ENCODE measurements at regions of chr19 and their contacts with region 1.

Region 1: GRCh38 chr19:57279418-57280066 is 743 bp upstream of the ZNF460 start:
- DNase-seq: peak; percentile 94 to 97
- H3K4me3 ChIP-seq: peak overlapping the region; percentile 74
- H3K4me3 Mint-ChIP-seq: no peak overlapping the region
- H3K27ac Mint-ChIP-seq: no peak overlapping the region
- H3K4me1 ChIP-seq: no peaks in the 10 kb centered on the region; the same call in none of the 2 replicates
- H3K4me1 Mint-ChIP-seq: peaks cover 11% of the 10 kb centered on the region
- H3K27me3 ChIP-seq: no peaks in the 10 kb centered on the region
- H3K27me3 Mint-ChIP-seq: no peaks in the 10 kb centered on the region
- CTCF ChIP-seq: peak in 1 of 2 experiments; percentile 52

Region 2: GRCh38 chr19:57191141-57192076 is 88.1 kb before region 1 on chr19 and contains the start of gene ZNF264:
- CTCF ChIA-PET with region 1: no interaction called
- POLR2A ChIA-PET with region 1: no interaction called
- intact Hi-C with region 1: loop called (anchors 2 kb)
- DNase-seq: peak; percentile 86 to 90
- H3K4me3 ChIP-seq: peak within 1 kb of the TSS; percentile 96
- H3K4me3 Mint-ChIP-seq: peak within 1 kb of the TSS; percentile 95
- H3K27ac Mint-ChIP-seq: peak within 1 kb of the TSS; percentile 98
- H3K4me1 ChIP-seq: 0 out of 2 replicates have a peak, but pooled peaks cover 10% of the 10 kb centered on the region
- H3K4me1 Mint-ChIP-seq: no peaks in the 10 kb centered on the region
- H3K27me3 ChIP-seq: no peaks in the 10 kb centered on the region
- H3K27me3 Mint-ChIP-seq: no peaks in the 10 kb centered on the region
- CTCF ChIP-seq: peak in 1 of 2 experiments; percentile 34
- total RNA-seq, gene ZNF264: 24.9 and 26.2 TPM in 2 replicates

Region 3: DNA sequence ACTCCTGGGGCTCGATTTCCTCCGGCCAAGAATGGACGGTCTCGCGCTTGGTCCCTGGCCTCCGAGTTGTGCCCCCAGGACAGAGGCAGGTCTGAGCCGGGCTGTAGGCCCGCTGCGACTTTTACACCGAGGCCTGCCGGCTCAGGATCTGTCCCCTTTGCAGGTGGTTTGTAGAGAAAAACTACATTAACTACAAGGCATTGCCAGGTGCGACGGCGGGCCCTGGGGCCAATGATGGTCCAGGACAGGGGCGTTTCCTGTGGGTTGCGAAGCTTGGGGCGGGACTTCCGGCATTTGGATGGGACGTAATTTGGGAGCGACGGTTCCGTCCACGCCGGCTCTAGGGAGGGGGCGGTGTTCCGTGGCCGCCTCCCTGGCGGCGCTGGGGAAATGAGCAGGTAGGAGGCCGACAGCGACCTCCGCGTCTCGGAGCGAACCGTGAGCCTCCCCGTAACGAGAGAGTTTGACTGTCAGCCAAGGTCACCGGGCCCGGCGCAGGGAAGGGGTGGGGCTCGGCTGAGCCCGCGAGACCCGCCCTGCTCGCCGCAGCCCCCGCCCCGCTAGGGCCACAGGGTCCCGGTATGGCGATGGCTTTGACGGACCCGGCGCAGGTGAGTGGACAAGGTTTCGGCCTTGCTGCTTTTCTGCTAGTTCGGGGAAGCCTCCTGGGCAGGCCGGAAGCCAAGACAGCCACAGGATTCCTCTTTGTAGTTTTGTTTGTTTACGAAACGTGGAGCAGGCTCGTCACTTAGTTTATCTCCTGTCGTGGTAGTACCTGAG is 39.0 kb before region 1 on chr19 and contains the start of gene ZNF805:
- CTCF ChIA-PET with region 1: no interaction called
- POLR2A ChIA-PET with region 1: no interaction called
- intact Hi-C with region 1: loop called (anchors 1 kb)
- DNase-seq: peak; percentile 96 to 97
- H3K4me3 ChIP-seq: peak within 1 kb of the TSS; percentile 77
- H3K4me3 Mint-ChIP-seq: peak within 1 kb of the TSS; percentile 75
- H3K27ac Mint-ChIP-seq: peak within 1 kb of the TSS; percentile 90
- H3K4me1 ChIP-seq: peaks cover 7% of the 10 kb centered on the region; the same call in 1 of the 2 replicates
- H3K4me1 Mint-ChIP-seq: no peaks in the 10 kb centered on the region
- H3K27me3 ChIP-seq: no peaks in the 10 kb centered on the region
- H3K27me3 Mint-ChIP-seq: no peaks in the 10 kb centered on the region
- CTCF ChIP-seq: no peak
- total RNA-seq, gene ZNF805: 13.6 and 13.8 TPM in 2 replicates

Region 4: DNA sequence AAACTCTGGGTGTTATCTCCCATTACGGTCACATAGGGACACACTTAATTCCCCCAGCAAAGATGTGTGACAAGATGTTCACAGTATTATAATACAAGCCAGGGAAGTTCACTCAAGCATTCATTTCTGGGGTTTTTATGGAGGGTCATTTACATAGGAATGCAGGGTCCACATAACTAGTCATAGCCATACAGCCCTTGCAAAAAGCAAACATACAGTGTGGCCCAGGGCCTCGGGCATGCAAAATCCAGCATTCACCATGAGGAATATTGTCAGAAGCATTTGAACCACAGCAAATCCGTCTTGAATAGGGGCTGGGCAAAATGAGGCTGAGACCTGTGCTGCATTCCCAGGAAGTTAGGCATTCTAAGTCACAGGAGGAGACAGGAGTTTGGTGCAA is 12.3 kb before region 1 on chr19:
- CTCF ChIA-PET with region 1: no interaction called
- POLR2A ChIA-PET with region 1: no interaction called
- intact Hi-C with region 1: loop called (anchors 1 kb)
- DNase-seq: peak; percentile 30 to 52
- H3K4me3 ChIP-seq: no peak overlapping the region
- H3K4me3 Mint-ChIP-seq: no peak overlapping the region
- H3K27ac Mint-ChIP-seq: no peak overlapping the region
- H3K4me1 ChIP-seq: peaks cover 9% of the 10 kb centered on the region; the same call in 1 of the 2 replicates
- H3K4me1 Mint-ChIP-seq: peaks cover 19% of the 10 kb centered on the region
- H3K27me3 ChIP-seq: no peaks in the 10 kb centered on the region
- H3K27me3 Mint-ChIP-seq: no peaks in the 10 kb centered on the region
- CTCF ChIP-seq: no peak

Region 5: DNA sequence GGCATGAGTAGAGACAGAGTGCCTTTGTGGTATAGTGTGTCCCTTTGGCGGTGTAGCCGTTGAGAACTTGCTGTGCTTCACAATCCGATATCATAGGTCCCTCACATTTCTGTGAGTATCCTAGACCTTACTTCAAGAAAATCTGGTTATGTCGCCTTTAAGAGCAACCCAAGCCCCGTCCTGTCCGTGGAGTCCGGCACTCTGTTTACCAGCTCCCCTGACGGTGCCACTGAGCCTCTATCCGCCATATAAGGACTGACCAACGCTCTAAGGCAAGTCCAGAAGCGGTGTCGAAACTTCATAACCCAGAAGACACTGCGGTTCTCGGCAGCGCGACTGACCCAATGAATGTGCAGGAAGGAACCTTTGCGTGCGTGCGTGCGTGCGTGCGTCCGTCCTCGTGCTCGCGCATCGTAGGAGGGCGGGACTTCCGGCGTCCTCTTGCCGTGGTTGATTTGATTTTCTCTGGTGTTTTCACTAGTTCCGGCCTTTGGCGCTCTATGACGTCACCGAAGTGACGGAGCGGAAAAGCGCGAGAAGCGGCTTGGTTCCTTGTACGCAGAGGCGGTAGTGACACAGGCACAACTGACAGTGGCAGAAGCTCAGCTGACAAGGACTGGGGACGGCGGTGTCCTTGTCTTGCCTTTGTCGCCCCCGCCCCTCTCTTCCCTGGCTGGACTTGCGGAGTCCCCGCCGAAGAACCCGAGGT is 83.6 kb after region 1 on chr19 and contains the starts of genes TRAPPC2B and ZNF547:
- CTCF ChIA-PET with region 1: no interaction called
- POLR2A ChIA-PET with region 1: no interaction called
- intact Hi-C with region 1: loop called (anchors 1 kb)
- DNase-seq: peak; percentile 98 to 99
- H3K4me3 ChIP-seq: peak within 1 kb of the TSS; percentile 77
- H3K4me3 Mint-ChIP-seq: peak within 1 kb of the TSS; percentile 84
- H3K27ac Mint-ChIP-seq: peak within 1 kb of the TSS; percentile 95
- H3K4me1 ChIP-seq: peaks cover 3% of the 10 kb centered on the region; the same call in 1 of the 2 replicates
- H3K4me1 Mint-ChIP-seq: peaks cover 21% of the 10 kb centered on the region
- H3K27me3 ChIP-seq: no peaks in the 10 kb centered on the region
- H3K27me3 Mint-ChIP-seq: no peaks in the 10 kb centered on the region
- CTCF ChIP-seq: no peak
- total RNA-seq, gene TRAPPC2B: 7.0 and 8.6 TPM in 2 replicates
- total RNA-seq, gene ZNF547: 0.95 and 1.8 TPM in 2 replicates